Panc1 (cell line): ENCODE measurements at regions of chr5 and their contacts with region 1.

Region 1: DNA sequence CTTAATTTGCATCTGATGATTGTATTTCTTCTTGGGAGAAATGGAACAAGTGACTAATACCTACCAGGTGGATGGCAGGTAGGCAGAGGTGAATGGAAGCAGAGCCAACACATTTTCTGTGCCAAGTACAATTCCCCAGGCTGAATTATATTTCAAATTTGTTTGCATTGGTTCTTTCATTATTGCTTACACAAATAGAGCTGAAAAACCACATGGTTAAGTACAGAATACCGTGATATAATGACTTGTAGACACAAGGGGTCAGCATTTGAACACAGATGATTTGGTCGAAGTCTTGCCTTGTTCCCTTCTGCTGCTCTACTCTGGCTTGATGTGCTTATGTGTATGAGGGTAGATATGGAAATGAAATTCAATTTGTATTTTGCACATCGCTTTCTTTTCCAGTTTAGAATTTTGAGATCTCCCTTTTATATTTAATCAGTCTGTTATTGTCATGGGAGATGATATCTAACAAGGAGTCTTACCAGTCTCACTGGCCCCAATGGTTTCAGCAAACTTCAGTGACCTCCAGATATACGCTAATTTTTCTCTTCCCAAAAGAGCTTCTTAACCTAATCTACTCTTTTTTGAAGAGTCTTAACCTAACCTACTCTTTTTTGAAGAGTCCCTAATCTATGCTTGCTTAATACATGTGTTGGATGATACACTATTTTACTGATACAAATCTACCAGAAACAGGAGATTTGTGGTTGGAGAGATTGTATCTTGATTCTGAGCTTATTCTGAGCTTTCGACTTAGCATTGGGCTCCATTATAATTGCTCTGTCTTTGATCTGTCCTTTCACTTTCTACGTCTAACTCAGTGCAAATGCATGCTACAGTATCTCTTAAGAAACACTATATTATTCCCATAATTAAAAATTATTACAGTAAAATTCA is 88.1 kb downstream of the PCSK1 start:
- DNase-seq: peak; percentile 79
- ATAC-seq: peak; percentile 98
- H3K4me3 ChIP-seq: no peak overlapping the region
- H3K27ac ChIP-seq: no peak overlapping the region
- H3K4me1 ChIP-seq: no peaks in the 10 kb centered on the region
- H3K27me3 ChIP-seq: no peaks in the 10 kb centered on the region; the same call in 1 of the 2 replicates
- CTCF ChIP-seq: peak; percentile 65; the same call in 1 of the 2 replicates

Region 2: DNA sequence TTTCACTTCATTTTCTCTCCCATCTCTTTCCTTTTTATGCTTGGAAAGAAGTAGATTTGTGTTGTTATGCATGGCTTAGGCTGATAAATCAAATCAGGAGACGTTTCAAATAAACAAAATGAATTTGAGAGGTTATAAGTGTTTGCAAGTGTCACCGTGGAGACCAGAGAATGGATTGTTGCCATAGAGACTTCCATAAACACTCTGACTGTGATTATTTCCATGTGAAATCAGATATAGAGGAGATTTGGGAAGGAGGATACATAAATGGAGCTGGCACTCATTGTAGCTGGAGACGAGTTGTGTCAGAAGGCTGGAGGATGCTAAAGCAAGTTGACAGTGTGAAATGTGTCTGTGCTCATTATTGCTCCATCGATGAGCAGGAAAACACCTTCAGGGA is 172.4 kb after region 1 on chr5:
- CTCF ChIA-PET with region 1: no interaction called
- POLR2A ChIA-PET with region 1: no interaction called
- in situ Hi-C with region 1: no loop called
- intact Hi-C with region 1: no loop called
- DNase-seq: no peak
- ATAC-seq: no peak
- H3K4me3 ChIP-seq: no peak overlapping the region
- H3K27ac ChIP-seq: no peak overlapping the region
- H3K4me1 ChIP-seq: no peaks in the 10 kb centered on the region
- H3K27me3 ChIP-seq: peaks cover 19% of the 10 kb centered on the region; the same call in 1 of the 2 replicates
- CTCF ChIP-seq: no peak

Region 3: GRCh38 chr5:96601811-96602244 is 256.9 kb after region 1 on chr5:
- CTCF ChIA-PET with region 1: interaction called, 12 read pairs
- POLR2A ChIA-PET with region 1: no interaction called
- in situ Hi-C with region 1: no loop called
- intact Hi-C with region 1: loop called (anchors 1 kb)
- DNase-seq: peak; percentile 67
- ATAC-seq: peak; percentile 92
- H3K4me3 ChIP-seq: no peak overlapping the region
- H3K27ac ChIP-seq: no peak overlapping the region
- H3K4me1 ChIP-seq: no peaks in the 10 kb centered on the region
- H3K27me3 ChIP-seq: peaks cover 3% of the 10 kb centered on the region
- CTCF ChIP-seq: peak; percentile 84

Region 4: GRCh38 chr5:96807075-96807654 is 462.2 kb after region 1 on chr5:
- CTCF ChIA-PET with region 1: no interaction called
- POLR2A ChIA-PET with region 1: no interaction called
- in situ Hi-C with region 1: no loop called
- intact Hi-C with region 1: no loop called
- DNase-seq: no peak
- ATAC-seq: peak; percentile 74
- H3K4me3 ChIP-seq: peak overlapping the region; percentile 82 to 85
- H3K27ac ChIP-seq: peak overlapping the region; percentile 97
- H3K4me1 ChIP-seq: peaks cover 19% of the 10 kb centered on the region
- H3K27me3 ChIP-seq: no peaks in the 10 kb centered on the region
- CTCF ChIP-seq: no peak